ENCODE measurements at regions of chr6 and their contacts with region 1.

Region 1: GRCh38 chr6:159654483-159655098 is 38.5 kb downstream of the SOD2 start:
- DNase-seq: no peak
- ATAC-seq: no peak
- H3K4me3 ChIP-seq: no peak overlapping the region
- H3K27ac ChIP-seq: no peak overlapping the region
- H3K4me1 ChIP-seq: no peaks in the 10 kb centered on the region
- H3K27me3 ChIP-seq: no peaks in the 10 kb centered on the region
- CTCF ChIP-seq: peak; percentile 45 to 71 (median 64)

Region 2: DNA sequence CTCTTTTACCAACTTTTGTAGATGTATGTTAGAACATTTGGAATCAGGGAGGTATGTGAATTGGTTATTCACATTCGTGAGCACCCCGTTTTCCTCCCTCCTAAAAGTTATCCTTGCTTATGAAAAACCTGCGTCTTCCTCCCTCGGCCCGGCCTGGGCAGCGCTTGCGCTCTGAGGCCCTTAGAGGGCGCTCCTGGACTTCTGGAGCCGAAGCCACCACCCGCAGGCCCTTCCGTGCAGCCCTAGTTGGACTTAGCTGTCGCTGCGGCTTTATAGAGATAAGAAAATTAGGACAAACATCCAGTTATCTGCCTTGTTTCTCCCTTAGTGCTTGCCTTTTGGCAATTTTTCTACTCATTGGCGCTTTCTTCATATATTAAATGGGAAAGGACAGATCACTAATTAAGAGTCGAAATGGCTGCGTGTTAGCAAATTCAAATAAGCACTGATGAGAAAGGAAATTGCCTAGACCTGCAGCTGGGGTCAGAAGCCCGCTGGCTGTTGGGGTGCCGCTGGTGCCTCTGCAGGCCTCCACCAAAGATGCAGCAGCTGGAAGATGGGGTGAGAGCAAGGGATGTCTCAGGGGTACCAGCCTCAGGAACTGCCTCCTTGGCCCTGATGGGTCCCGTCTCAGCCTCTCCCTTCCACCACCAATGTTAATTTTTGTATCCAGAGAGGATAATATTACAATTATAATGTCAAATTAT is 480.2 kb before region 1 on chr6:
- intact Hi-C with region 1: loop called in 9 of 10 experiments (anchors 2 to 5 kb)
- DNase-seq: peak; percentile 56 to 71
- ATAC-seq: peak; percentile 81 to 88 (median 84)
- H3K4me3 ChIP-seq: peak overlapping the region in 2 of 10 donors; percentile 5 to 21
- H3K27ac ChIP-seq: no peak overlapping the region
- H3K4me1 ChIP-seq: peaks cover 0 to 36% (median 13%) of the 10 kb centered on the region in 9 donors
- H3K27me3 ChIP-seq: peaks cover 0 to 59% (median 52%) of the 10 kb centered on the region in 7 donors
- CTCF ChIP-seq: peak; percentile 79 to 97 (median 91)

Region 3: GRCh38 chr6:159252955-159253508 is 401.6 kb before region 1 on chr6:
- intact Hi-C with region 1: loop called in 1 of 10 experiments (anchors 10 kb)
- DNase-seq: no peak
- ATAC-seq: peak in 3 of 8 donors; percentile 32 to 67 (median 39)
- H3K4me3 ChIP-seq: no peak overlapping the region
- H3K27ac ChIP-seq: no peak overlapping the region
- H3K4me1 ChIP-seq: peaks cover 0 to 11% (median 0%) of the 10 kb centered on the region in 9 donors
- H3K27me3 ChIP-seq: peaks cover 0 to 5% (median 0%) of the 10 kb centered on the region in 7 donors
- CTCF ChIP-seq: peak in 8 of 9 donors; percentile 33 to 70 (median 57)

Region 4: DNA sequence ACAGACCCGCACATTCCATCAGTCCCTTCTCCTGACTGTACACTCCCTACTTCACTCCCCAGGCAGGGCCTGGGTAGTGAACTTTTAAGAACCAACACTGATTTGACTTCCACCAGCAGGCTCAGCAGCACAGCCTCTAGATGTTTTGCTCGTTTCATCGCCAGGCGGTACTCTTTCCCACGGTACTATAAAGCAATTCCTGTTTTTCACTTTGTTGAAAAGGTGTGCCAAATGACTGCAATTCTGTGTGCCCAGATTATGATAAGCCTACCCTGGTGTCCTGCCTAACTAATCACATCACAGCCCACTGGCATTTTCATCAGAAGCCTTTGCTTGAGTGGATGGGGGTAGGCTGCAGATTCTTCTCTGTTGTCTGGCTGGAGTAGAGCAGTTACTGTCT is 59.8 kb after region 1 on chr6:
- intact Hi-C with region 1: no loop called
- DNase-seq: no peak
- ATAC-seq: peak in 4 of 8 donors; percentile 6 to 38 (median 26)
- H3K4me3 ChIP-seq: no peak overlapping the region
- H3K27ac ChIP-seq: peak overlapping the region in 4 of 10 donors; percentile 25 to 92 (median 53)
- H3K4me1 ChIP-seq: peaks cover 5 to 49% (median 20%) of the 10 kb centered on the region in 9 donors
- H3K27me3 ChIP-seq: no peaks in the 10 kb centered on the region
- CTCF ChIP-seq: no peak

Region 5: GRCh38 chr6:159726918-159727716 is 72.5 kb after region 1 on chr6 and contains the start of gene WTAP:
- intact Hi-C with region 1: no loop called
- DNase-seq: peak; percentile 94 to 95
- ATAC-seq: peak; percentile 96 to 98 (median 97)
- H3K4me3 ChIP-seq: peak within 1 kb of the TSS; percentile 64 to 96 (median 86)
- H3K27ac ChIP-seq: peak within 1 kb of the TSS; percentile 92 to 100 (median 99)
- H3K4me1 ChIP-seq: peaks cover 0 to 57% (median 51%) of the 10 kb centered on the region in 9 donors
- H3K27me3 ChIP-seq: no peaks in the 10 kb centered on the region
- CTCF ChIP-seq: no peak
- total RNA-seq, gene WTAP: 44.4 to 70.1 (median 47.2) TPM

Region 6: GRCh38 chr6:160088069-160088783 is 433.6 kb after region 1 on chr6:
- intact Hi-C with region 1: no loop called
- DNase-seq: peak; percentile 40 to 44
- ATAC-seq: peak in 7 of 8 donors; percentile 51 to 78 (median 65)
- H3K4me3 ChIP-seq: no peak overlapping the region
- H3K27ac ChIP-seq: no peak overlapping the region
- H3K4me1 ChIP-seq: no peaks in the 10 kb centered on the region
- H3K27me3 ChIP-seq: no peaks in the 10 kb centered on the region
- CTCF ChIP-seq: peak; percentile 40 to 71 (median 63)

Measured in heart right ventricle (tissue), 16 donors.